PC-3 (cell line): ENCODE measurements at regions of chr12 and their contacts with region 1.

Region 1: GRCh38 chr12:121688966-121689365 is 19.5 kb upstream of the MORN3 start:
- DNase-seq: no peak
- ATAC-seq: no peak
- H3K4me3 ChIP-seq: no peak overlapping the region
- H3K27ac ChIP-seq: no peak overlapping the region
- H3K4me1 ChIP-seq: no peaks in the 10 kb centered on the region
- H3K27me3 ChIP-seq: no peaks in the 10 kb centered on the region
- CTCF ChIP-seq: no peak

Region 2: GRCh38 chr12:121399391-121400331 is 289.3 kb before region 1 on chr12 and contains the start of gene RNF34:
- CTCF ChIA-PET with region 1: no interaction called
- POLR2A ChIA-PET with region 1: no interaction called
- intact Hi-C with region 1: no loop called
- DNase-seq: peak; percentile 99
- ATAC-seq: peak; percentile 93
- H3K4me3 ChIP-seq: peak within 1 kb of the TSS; percentile 97
- H3K27ac ChIP-seq: peak within 1 kb of the TSS; percentile 52
- H3K4me1 ChIP-seq: peaks cover 22% of the 10 kb centered on the region
- H3K27me3 ChIP-seq: no peaks in the 10 kb centered on the region
- CTCF ChIP-seq: no peak
- total RNA-seq, gene RNF34: 73.7 and 88.2 TPM in 2 replicates

Region 3: DNA sequence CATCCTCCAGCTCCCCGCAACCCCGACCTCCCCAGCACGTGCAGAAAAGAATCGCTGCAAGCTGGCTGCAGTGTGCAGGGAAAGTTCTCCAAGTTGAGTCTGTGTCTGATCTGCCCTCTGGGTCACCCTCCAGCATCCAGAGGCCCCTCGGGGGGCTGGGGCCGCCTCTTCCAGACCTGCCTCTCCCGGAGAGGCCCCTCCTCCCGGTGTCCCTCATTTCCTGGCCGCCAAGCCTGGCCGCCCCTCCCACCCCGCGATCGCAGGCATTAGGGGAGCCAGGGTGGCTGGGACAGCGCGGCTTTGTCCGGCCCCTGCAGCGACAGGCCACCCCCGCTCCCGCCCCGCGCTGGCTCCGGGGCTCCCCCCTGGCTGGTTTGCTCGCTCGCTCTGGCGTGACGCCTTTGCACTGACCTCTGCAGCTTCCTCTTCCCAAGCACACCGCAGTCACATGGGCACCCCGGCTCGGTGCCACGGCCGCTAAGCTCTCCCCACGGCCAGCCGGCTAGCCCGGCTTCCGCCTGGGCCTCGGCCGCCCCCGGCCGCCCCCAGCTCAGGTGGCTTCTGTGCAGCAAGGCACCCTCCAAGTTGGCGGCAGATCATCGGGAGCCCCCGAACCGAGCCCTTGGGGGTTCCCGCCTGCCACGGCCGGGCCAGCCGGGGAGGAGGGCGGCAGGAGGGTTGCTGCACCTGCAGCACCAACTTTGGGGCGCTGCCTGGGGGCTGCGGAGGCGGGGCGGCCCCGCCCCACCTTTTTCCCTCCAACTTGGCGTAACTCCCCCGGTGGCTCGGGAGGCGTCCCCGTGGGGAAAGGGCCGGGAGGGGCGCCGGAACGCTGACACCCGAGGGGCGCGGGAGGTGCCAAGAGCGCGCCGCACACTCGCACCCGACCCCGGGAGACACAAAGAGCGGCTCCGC is 151.8 kb before region 1 on chr12:
- CTCF ChIA-PET with region 1: no interaction called
- POLR2A ChIA-PET with region 1: interaction called, 18 read pairs
- intact Hi-C with region 1: no loop called
- DNase-seq: peak; percentile 66
- ATAC-seq: peak; percentile 78
- H3K4me3 ChIP-seq: peak overlapping the region; percentile 89
- H3K27ac ChIP-seq: no peak overlapping the region
- H3K4me1 ChIP-seq: peaks cover 18% of the 10 kb centered on the region; the same call in 1 of the 2 replicates
- H3K27me3 ChIP-seq: no peaks in the 10 kb centered on the region
- CTCF ChIP-seq: no peak

Region 4: GRCh38 chr12:121992059-121992879 is 303.3 kb after region 1 on chr12:
- CTCF ChIA-PET with region 1: no interaction called
- POLR2A ChIA-PET with region 1: no interaction called
- intact Hi-C with region 1: no loop called
- DNase-seq: peak; percentile 99
- ATAC-seq: peak; percentile 90
- H3K4me3 ChIP-seq: peak overlapping the region; percentile 37
- H3K27ac ChIP-seq: peak overlapping the region; percentile 96
- H3K4me1 ChIP-seq: peaks cover 33% of the 10 kb centered on the region
- H3K27me3 ChIP-seq: no peaks in the 10 kb centered on the region
- CTCF ChIP-seq: 0 out of 2 replicates have a peak, but pooled peaks have one; percentile 10